ENCODE measurements at regions of chr19 and their contacts with region 1.

Region 1: DNA sequence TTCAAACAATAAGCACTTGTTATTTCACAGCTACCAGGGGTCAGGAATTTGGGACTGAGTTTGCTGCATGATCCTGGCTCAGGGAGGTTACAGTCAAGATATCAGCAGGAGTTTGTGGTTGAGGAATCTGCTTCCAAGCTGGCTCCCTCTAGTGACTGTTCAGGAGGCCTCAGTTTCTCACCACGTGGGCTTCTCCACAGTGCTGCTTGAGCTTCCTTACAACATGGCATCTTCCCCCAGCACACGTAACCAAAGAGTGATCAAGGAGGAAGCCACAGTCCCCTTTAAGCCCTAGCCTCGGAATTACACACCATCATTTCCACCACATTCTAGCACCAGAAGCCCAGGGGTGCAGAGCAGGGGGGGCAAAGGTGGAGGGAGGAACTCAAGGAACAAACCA is 28.8 kb downstream of the CELF5 start:
- DNase-seq: peak; percentile 16
- ATAC-seq: no peak
- H3K4me3 ChIP-seq: no peak overlapping the region
- H3K27ac ChIP-seq: no peak overlapping the region
- H3K4me1 ChIP-seq: no peaks in the 10 kb centered on the region
- H3K27me3 ChIP-seq: no peaks in the 10 kb centered on the region
- CTCF ChIP-seq: 0 out of 6 replicates have a peak, but pooled peaks of 1 of the 3 experiments have one; percentile 12
- POLR2A ChIP-seq: no peak
- RAD21 ChIP-seq: no peak

Region 2: GRCh38 chr19:3084943-3085342 is 168.3 kb before region 1 on chr19:
- CTCF ChIA-PET with region 1: no interaction called
- POLR2A ChIA-PET with region 1: no interaction called
- RAD21 ChIA-PET with region 1: no interaction called
- intact Hi-C with region 1: no loop called
- DNase-seq: no peak
- ATAC-seq: no peak
- H3K4me3 ChIP-seq: no peak overlapping the region
- H3K27ac ChIP-seq: no peak overlapping the region
- H3K4me1 ChIP-seq: peaks cover 3 to 4% of the 10 kb centered on the region in 2 experiments; a peak in 1 of 4 replicates
- H3K27me3 ChIP-seq: no peaks in the 10 kb centered on the region
- CTCF ChIP-seq: no peak
- POLR2A ChIP-seq: no peak
- RAD21 ChIP-seq: no peak

Region 3: DNA sequence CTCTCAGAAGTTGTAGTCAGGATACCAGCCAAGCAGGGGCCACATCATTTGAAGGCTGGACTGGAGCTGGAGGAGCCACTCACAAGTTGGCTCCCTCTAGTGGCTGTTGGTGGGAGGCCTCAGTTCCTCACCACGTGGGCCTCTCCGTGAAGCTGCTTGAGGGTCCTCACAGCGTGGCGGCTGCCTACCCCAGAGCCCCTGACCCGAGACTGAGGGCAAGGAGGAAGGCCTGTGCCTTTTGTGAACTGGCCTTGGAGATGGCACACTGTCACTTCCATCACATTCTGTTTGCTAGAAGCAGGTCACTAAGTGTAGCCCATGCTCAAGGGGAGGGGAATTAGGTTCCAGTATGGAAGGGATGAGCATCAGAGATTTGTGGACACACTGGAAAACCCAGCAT is 144.5 kb before region 1 on chr19:
- CTCF ChIA-PET with region 1: no interaction called
- POLR2A ChIA-PET with region 1: no interaction called
- RAD21 ChIA-PET with region 1: no interaction called
- intact Hi-C with region 1: no loop called
- DNase-seq: no peak
- ATAC-seq: peak; percentile 77
- H3K4me3 ChIP-seq: no peak overlapping the region
- H3K27ac ChIP-seq: no peak overlapping the region
- H3K4me1 ChIP-seq: peaks cover 3 to 5% of the 10 kb centered on the region in 2 experiments; a peak in 3 of 4 replicates
- H3K27me3 ChIP-seq: no peaks in the 10 kb centered on the region
- CTCF ChIP-seq: peak; percentile 49 to 95 (median 89); a peak in 5 of 6 replicates
- POLR2A ChIP-seq: no peak
- RAD21 ChIP-seq: no peak

Region 4: DNA sequence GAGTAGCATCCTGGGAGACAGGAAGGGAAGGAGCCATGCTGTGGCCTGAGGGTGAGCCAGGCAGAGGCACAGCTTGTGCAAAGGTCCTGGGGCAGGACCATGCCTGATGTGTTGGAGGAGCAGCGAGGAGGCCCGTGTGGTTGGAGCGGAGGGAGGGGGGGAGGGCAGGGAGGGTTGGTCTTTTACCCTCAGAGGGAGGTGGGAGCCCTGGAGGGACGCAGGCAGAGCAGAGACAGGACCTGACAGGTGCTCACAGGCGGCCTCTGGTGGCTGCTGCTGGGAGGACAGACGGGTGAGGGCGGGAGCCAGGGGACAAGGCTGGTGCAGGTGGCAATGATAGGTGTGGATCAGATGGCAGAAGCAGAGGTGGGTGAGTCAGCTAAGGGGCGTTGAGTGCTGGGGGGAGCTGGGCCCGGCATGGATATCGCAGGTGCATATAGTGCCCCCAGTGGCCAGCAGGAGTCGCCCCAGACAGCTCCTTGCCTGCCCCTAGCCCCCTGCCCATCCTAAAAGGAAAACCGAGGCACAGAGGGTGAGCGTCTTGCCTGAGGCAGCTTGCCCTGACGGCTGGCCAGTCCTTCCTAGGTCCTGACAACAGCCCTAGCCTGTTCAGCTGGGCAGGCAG is 127.3 kb before region 1 on chr19:
- CTCF ChIA-PET with region 1: no interaction called
- POLR2A ChIA-PET with region 1: no interaction called
- RAD21 ChIA-PET with region 1: no interaction called
- intact Hi-C with region 1: no loop called
- DNase-seq: peak; percentile 60
- ATAC-seq: peak; percentile 96
- H3K4me3 ChIP-seq: no peak overlapping the region
- H3K27ac ChIP-seq: no peak overlapping the region
- H3K4me1 ChIP-seq: peaks cover 6 to 7% of the 10 kb centered on the region in 2 experiments; a peak in 3 of 4 replicates
- H3K27me3 ChIP-seq: no peaks in the 10 kb centered on the region
- CTCF ChIP-seq: peak; percentile 76 to 88 (median 81)
- POLR2A ChIP-seq: no peak
- RAD21 ChIP-seq: peak; percentile 52

Region 5: DNA sequence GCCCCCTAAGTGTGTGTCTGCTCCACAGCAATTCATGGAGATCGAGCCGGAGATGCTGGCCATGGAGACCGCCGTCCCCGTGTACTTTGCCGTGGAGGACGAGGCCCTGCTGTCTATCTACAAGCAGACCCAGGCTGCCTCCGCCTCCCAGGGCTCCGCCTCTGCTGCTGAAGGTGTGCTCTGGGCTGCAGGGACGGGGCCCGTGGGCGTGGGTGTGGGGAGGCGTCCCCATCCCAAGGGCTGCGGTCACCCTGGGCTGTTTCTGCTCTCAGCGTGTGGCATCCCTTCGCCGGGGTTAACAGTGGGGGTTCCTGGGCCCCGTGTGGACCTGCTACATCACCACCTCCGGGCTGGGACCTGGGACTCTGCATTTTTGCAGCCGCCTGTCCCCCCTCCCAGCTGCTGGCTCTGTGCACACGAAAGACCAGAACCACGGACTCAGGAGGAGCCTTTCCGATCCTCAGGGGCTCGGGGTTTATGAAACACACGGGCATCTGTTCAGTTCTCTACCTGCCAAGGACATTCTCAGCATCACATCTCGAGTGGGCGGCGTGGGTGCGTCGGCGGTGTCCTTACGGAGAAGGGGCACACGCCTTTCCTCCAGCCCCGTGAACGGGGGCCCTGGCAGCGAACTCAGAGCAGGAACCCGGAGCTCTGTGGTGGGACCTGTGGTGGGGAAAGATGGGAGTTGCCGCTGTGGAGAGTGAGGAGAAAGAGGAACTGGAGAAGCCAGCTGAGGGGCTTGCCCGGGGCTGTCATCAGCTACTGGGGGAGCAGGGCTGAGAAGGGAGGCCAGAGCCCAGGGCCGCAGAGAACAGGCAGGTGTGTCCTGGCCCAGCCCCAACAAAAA is 59.8 kb before region 1 on chr19:
- CTCF ChIA-PET with region 1: no interaction called
- POLR2A ChIA-PET with region 1: no interaction called
- RAD21 ChIA-PET with region 1: no interaction called
- intact Hi-C with region 1: no loop called
- DNase-seq: no peak
- ATAC-seq: peak; percentile 33; the same call in 1 of the 2 replicates
- H3K4me3 ChIP-seq: no peak overlapping the region
- H3K27ac ChIP-seq: no peak overlapping the region
- H3K4me1 ChIP-seq: peaks cover 0 to 6% of the 10 kb centered on the region in 2 experiments; a peak in 1 of 4 replicates
- H3K27me3 ChIP-seq: no peaks in the 10 kb centered on the region
- CTCF ChIP-seq: no peak
- POLR2A ChIP-seq: no peak
- RAD21 ChIP-seq: no peak

Region 6: GRCh38 chr19:3275583-3276340 is 22.5 kb after region 1 on chr19:
- CTCF ChIA-PET with region 1: interaction called, 10 read pairs
- POLR2A ChIA-PET with region 1: no interaction called
- RAD21 ChIA-PET with region 1: no interaction called
- intact Hi-C with region 1: no loop called
- DNase-seq: peak; percentile 92
- ATAC-seq: peak; percentile 80
- H3K4me3 ChIP-seq: peak overlapping the region; percentile 50 to 61
- H3K27ac ChIP-seq: peak overlapping the region; percentile 86
- H3K4me1 ChIP-seq: peaks cover 13 to 24% of the 10 kb centered on the region in 2 experiments
- H3K27me3 ChIP-seq: no peaks in the 10 kb centered on the region
- CTCF ChIP-seq: peak in 2 of 3 experiments; percentile 83 to 99
- POLR2A ChIP-seq: peak; percentile 23
- RAD21 ChIP-seq: no peak

Measured in HCT116 (cell line).